Prostate gland (tissue), 2 donors: ENCODE measurements at regions of chr12 and their contacts with region 1.

Region 1: GRCh38 chr12:93502802-93503623 is 35.7 kb downstream of the MRPL42 start:
- DNase-seq: peak; percentile 36
- H3K4me3 ChIP-seq: no peak overlapping the region
- H3K27ac ChIP-seq: no peak overlapping the region
- H3K4me1 ChIP-seq: no peaks in the 10 kb centered on the region
- H3K27me3 ChIP-seq: no peaks in the 10 kb centered on the region
- CTCF ChIP-seq: peak; percentile 54 to 87 (median 83)
- POLR2A ChIP-seq: no peak

Region 2: DNA sequence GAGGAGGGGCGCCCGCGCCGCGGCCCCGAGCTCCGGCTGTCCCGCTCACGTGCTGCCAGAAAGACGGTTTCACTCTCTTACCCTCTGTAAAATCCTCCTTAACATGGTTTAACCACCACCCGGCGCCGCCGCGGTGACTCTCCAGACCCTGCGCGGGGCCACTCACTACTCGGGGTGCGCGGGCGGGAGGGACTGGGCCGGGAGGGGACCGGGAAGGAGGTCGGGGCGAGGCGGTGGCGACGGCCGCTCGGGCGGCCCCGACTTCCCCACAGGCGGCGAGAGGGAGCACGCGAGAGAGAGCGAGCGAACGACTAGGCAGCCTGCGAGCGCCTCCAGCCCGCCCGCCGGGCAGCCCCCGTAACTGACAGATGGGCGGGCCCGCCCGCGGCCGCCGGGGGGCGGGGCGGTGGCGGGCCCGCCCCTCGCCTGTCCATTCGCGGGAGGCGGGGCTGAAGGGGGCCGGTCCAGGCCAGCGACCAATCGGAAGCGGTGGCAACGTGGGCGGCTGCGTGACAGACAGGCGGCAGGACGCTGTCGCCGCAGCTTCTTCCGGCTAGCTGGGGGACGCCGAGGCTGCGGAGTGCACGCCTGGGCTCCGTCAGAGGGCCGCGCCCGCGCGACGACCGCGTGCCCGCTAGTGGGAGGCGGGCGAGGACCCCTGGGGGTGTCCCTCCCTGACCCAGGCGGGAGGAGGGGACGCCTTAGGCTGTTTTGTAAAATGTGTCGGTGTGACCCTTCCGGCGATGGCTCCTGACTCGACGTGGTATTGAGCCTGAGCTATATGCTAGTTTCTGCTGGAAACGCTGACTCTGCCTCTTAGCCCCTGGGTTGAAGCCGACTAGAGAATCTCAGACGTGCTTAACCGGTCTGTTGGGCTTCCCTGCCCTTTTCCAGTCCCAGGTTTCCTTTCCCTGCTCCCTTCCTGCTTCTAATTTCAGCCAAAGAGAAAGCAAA is 573.8 kb before region 1 on chr12 and contains the start of gene EEA1:
- intact Hi-C with region 1: no loop called
- DNase-seq: peak; percentile 97
- H3K4me3 ChIP-seq: peak within 1 kb of the TSS; percentile 85
- H3K27ac ChIP-seq: peak within 1 kb of the TSS; percentile 93 to 98
- H3K4me1 ChIP-seq: no peaks in the 10 kb centered on the region
- H3K27me3 ChIP-seq: no peaks in the 10 kb centered on the region
- CTCF ChIP-seq: peak in 3 of 4 experiments; percentile 21 to 51 (median 34)
- POLR2A ChIP-seq: peak; percentile 94
- total RNA-seq, gene EEA1: 18.6 to 22.6 TPM

Region 3: DNA sequence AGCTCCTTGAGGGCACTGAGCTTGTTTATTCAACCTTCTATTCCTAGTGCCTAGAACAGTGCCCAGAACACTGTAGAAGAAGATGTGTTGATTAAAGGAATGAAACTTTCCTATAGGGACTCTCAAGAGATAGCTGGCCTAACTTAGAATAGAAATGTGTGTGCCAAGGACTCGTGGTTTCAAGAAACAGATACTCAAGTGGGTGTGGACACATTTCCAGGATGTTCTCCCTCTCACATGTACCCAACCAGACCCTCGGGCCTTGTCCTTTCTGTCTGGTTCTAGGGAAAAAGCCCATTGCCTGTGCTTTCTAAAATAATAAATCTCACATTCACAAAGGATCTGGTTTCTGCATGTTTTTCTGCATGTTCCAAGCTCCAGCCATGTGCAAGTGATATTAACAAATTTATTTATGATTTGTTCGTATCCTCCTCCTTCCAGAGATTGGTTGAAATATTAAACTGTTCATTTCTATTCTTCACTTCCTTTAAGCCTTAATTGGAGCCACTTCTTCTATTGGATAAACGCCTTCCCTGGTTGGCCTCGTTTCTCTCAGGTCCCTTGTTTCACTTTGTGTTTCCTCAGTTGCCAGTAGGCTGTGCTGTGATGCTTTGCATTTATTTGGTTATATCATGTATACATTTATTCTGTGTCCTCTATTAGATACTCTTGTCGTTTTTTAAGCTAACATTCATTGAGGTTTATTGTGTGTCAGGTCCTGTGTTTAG is 263.9 kb after region 1 on chr12:
- intact Hi-C with region 1: loop called (anchors 5 kb)
- DNase-seq: peak; percentile 54
- H3K4me3 ChIP-seq: no peak overlapping the region
- H3K27ac ChIP-seq: peak overlapping the region; percentile 54 to 60
- H3K4me1 ChIP-seq: no peaks in the 10 kb centered on the region
- H3K27me3 ChIP-seq: no peaks in the 10 kb centered on the region
- CTCF ChIP-seq: peak in 3 of 4 experiments; percentile 54 to 80 (median 70)
- POLR2A ChIP-seq: no peak

Region 4: GRCh38 chr12:93847517-93848474 is 344.8 kb after region 1 on chr12:
- intact Hi-C with region 1: loop called (anchors 10 kb)
- DNase-seq: no peak
- H3K4me3 ChIP-seq: no peak overlapping the region
- H3K27ac ChIP-seq: no peak overlapping the region
- H3K4me1 ChIP-seq: no peaks in the 10 kb centered on the region
- H3K27me3 ChIP-seq: no peaks in the 10 kb centered on the region
- CTCF ChIP-seq: no peak
- POLR2A ChIP-seq: no peak

Region 5: GRCh38 chr12:93979189-93979588 is 476.2 kb after region 1 on chr12:
- intact Hi-C with region 1: loop called (anchors 5 kb)
- DNase-seq: peak; percentile 29
- H3K4me3 ChIP-seq: no peak overlapping the region
- H3K27ac ChIP-seq: no peak overlapping the region
- H3K4me1 ChIP-seq: no peaks in the 10 kb centered on the region
- H3K27me3 ChIP-seq: no peaks in the 10 kb centered on the region
- CTCF ChIP-seq: peak in 3 of 4 experiments; percentile 46 to 74 (median 48)
- POLR2A ChIP-seq: no peak

Region 6: GRCh38 chr12:94101738-94102660 is 599.0 kb after region 1 on chr12:
- intact Hi-C with region 1: loop called (anchors 2 kb)
- DNase-seq: peak; percentile 86
- H3K4me3 ChIP-seq: peak overlapping the region; percentile 35 to 59
- H3K27ac ChIP-seq: peak overlapping the region; percentile 49 to 72
- H3K4me1 ChIP-seq: peaks cover 3% of the 10 kb centered on the region
- H3K27me3 ChIP-seq: no peaks in the 10 kb centered on the region
- CTCF ChIP-seq: peak; percentile 60 to 91 (median 86)
- POLR2A ChIP-seq: peak; percentile 12